ENCODE measurements at regions of chr16 and their contacts with region 1.

Region 1: GRCh38 chr16:77660311-77660710 is 62.0 kb upstream of the NUDT7 start:
- DNase-seq: no peak
- H3K4me3 ChIP-seq: no peak overlapping the region
- H3K27ac ChIP-seq: no peak overlapping the region
- H3K4me1 ChIP-seq: no peaks in the 10 kb centered on the region
- H3K27me3 ChIP-seq: no peaks in the 10 kb centered on the region
- CTCF ChIP-seq: peak; percentile 27 to 47 (median 33)
- POLR2A ChIP-seq: no peak

Region 2: GRCh38 chr16:77236063-77236511 is 424.2 kb before region 1 on chr16:
- intact Hi-C with region 1: loop called (anchors 10 kb)
- DNase-seq: no peak
- H3K4me3 ChIP-seq: peak overlapping the region in 1 of 2 donors; percentile 35
- H3K27ac ChIP-seq: no peak overlapping the region
- H3K4me1 ChIP-seq: no peaks in the 10 kb centered on the region
- H3K27me3 ChIP-seq: no peaks in the 10 kb centered on the region
- CTCF ChIP-seq: peak; percentile 99 to 100 (median 100)
- POLR2A ChIP-seq: no peak

Region 3: GRCh38 chr16:77344341-77344740 is 316.0 kb before region 1 on chr16:
- intact Hi-C with region 1: no loop called
- DNase-seq: no peak
- H3K4me3 ChIP-seq: no peak overlapping the region
- H3K27ac ChIP-seq: no peak overlapping the region
- H3K4me1 ChIP-seq: peaks cover 6% of the 10 kb centered on the region
- H3K27me3 ChIP-seq: no peaks in the 10 kb centered on the region
- CTCF ChIP-seq: no peak
- POLR2A ChIP-seq: no peak

Region 4: DNA sequence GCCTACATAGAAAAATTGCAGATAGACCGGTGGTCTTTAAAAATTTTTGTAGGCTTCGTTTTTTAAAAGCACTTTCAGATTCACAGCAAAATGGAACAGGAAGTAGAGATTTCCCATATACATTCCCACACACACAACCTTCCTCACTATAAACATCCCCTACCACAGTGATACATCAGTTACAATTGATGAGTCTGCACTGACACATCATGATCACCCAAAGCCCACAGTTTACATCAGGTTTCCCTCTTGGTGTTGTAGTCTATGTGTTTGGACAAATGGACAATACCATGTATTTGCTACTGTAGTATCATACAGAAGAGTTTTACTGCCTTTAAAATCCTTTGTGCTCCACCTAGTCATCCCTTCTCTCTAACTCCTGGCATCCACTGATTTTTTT is 111.5 kb before region 1 on chr16:
- intact Hi-C with region 1: no loop called
- DNase-seq: no peak
- H3K4me3 ChIP-seq: no peak overlapping the region
- H3K27ac ChIP-seq: no peak overlapping the region
- H3K4me1 ChIP-seq: peaks cover 6% of the 10 kb centered on the region
- H3K27me3 ChIP-seq: no peaks in the 10 kb centered on the region
- CTCF ChIP-seq: no peak
- POLR2A ChIP-seq: no peak

Region 5: GRCh38 chr16:77732241-77732946 is 72.1 kb after region 1 on chr16:
- intact Hi-C with region 1: no loop called
- DNase-seq: no peak
- H3K4me3 ChIP-seq: no peak overlapping the region
- H3K27ac ChIP-seq: no peak overlapping the region
- H3K4me1 ChIP-seq: no peaks in the 10 kb centered on the region
- H3K27me3 ChIP-seq: no peaks in the 10 kb centered on the region
- CTCF ChIP-seq: no peak
- POLR2A ChIP-seq: no peak

Measured in vagina (tissue), 2 donors.